ENCODE measurements at regions of chr6 and their contacts with region 1.

Region 1: DNA sequence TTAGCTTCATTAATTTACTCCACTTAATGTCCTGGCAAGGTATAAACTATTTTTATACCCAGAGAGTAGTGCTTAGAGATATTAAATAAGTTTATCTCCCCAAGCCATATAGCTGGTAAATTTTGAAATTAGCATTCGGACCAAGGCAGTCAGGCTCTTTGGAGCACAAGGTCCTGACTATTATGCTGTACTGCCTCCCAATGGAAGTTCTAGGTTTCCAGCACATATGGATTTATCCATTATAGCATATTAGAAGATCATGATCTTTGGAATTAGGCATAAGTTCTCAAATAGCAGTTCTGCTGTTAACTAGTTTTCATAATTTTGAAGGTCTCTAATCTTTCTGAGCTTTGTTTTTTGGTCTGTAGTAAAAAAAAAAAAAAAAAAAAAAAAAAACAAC is 835.3 kb upstream of the EPHA7 start:
- DNase-seq: peak; percentile 5
- ATAC-seq: peak; percentile 31; the same call in 1 of the 2 replicates
- H3K4me3 ChIP-seq: no peak overlapping the region
- H3K27ac ChIP-seq: no peak overlapping the region
- H3K4me1 ChIP-seq: no peaks in the 10 kb centered on the region
- H3K27me3 ChIP-seq: no peaks in the 10 kb centered on the region
- CTCF ChIP-seq: peak; percentile 32; the same call in 1 of the 2 replicates

Region 2: GRCh38 chr6:94089941-94090340 is 164.7 kb before region 1 on chr6:
- CTCF ChIA-PET with region 1: no interaction called
- POLR2A ChIA-PET with region 1: no interaction called
- intact Hi-C with region 1: loop called (anchors 10 kb)
- DNase-seq: no peak
- ATAC-seq: no peak
- H3K4me3 ChIP-seq: no peak overlapping the region
- H3K27ac ChIP-seq: no peak overlapping the region
- H3K4me1 ChIP-seq: no peaks in the 10 kb centered on the region
- H3K27me3 ChIP-seq: no peaks in the 10 kb centered on the region
- CTCF ChIP-seq: no peak

Region 3: DNA sequence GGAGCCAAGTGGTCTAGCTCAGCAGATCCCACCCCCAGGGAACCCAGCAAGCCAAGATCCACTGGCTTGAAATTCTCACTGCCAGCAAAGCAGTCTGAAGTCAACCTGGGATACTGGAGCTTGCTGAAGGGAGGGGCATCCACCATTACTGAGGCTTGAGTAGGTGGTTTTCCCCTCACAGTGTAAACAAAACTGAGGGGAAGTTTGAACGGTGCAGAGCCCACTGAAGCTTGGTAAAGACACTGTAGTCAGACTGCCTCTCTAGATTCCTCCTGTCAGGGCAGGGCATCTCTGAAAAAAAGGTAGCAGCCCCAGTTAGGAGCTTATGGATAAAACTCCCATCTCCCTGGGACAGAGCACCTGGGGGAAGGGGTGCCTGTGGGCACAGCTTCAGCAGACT is 15.8 kb before region 1 on chr6:
- CTCF ChIA-PET with region 1: no interaction called
- POLR2A ChIA-PET with region 1: no interaction called
- intact Hi-C with region 1: no loop called
- DNase-seq: no peak
- ATAC-seq: no peak
- H3K4me3 ChIP-seq: no peak overlapping the region
- H3K27ac ChIP-seq: no peak overlapping the region
- H3K4me1 ChIP-seq: no peaks in the 10 kb centered on the region
- H3K27me3 ChIP-seq: no peaks in the 10 kb centered on the region
- CTCF ChIP-seq: no peak